BJ (cell line): ENCODE measurements at regions of chr7 and their contacts with region 1.

Region 1: DNA sequence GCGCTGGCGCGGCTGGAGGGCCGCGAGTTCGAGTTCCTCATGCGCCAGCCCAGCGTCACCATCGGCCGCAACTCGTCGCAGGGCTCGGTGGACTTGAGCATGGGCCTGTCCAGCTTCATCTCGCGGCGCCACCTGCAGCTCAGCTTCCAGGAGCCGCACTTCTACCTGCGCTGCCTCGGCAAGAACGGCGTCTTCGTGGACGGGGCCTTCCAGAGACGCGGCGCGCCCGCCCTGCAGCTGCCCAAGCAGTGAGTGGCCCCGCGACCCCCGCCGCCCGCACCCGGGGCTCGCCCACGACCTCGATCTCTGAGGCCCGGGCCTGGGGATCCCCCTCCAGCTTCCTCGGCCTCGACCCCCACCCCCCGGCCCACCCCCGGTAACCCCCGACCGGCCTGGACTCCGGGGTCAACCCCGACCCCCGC is 537 bp downstream of the FOXK1 start:
- DNase-seq: no peak
- H3K4me3 ChIP-seq: peak overlapping the region; percentile 92
- H3K27me3 ChIP-seq: no peaks in the 10 kb centered on the region
- CTCF ChIP-seq: no peak

Region 2: DNA sequence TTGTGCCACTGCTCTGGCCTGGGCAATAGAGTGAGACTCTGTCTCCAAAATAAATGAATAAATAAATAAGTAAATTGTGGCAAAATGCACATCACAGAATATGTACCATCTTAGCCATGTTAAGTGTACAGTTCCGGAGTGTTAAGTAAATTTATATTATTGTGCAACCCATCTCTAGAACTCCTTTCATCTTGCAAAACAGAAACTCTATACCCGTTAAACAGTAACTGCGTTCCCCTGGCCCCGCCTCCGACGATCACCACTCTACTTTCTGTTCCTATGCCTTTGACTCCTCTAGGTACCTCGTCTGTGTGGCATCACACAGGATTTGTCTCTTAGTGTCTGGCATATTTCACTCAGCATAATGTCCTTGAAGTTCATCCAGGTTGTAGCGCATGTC is 356.9 kb before region 1 on chr7:
- CTCF ChIA-PET with region 1: no interaction called
- POLR2A ChIA-PET with region 1: no interaction called
- DNase-seq: no peak
- H3K4me3 ChIP-seq: no peak overlapping the region
- H3K27me3 ChIP-seq: no peaks in the 10 kb centered on the region
- CTCF ChIP-seq: no peak

Region 3: DNA sequence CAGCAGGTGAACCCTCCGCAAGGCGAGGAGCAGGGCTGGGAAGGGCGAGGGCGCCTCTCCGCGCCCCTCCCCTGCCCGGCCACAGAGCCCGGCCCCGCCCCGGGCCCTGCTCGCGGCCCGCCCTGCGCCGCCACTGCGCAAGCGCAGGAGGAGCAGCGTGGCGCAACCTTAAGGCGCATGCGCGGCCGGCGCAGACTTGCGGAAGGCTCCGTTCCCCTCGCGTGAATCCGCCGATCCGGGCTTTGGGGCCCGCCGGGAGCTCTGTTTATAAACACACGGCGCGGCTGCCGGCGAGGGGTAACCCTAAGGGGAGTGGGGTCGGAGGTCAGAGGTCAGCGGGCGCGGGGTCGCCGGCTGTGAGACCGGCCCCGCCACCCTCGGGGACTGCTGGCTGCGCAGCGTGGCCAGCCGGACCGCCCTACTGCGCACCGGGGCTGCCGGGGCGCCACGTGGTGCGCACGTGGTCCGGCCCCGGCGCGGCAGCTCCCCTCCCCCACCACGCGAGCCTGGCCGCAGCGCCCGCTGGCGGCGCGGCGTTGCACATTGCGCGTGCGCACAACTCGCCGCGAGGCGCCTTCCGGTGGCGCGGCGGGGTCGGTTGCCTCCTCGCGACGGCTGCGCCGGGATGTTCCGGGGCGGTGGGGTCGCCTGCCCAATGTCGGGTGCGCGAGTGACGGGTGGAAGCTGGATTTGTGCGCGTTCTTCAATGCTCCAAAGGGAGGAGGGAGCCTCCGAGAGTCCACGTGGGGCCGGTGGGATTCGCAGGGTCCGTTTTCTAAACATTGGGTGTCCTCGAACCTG is 40.8 kb before region 1 on chr7:
- CTCF ChIA-PET with region 1: interaction called, 10 read pairs
- POLR2A ChIA-PET with region 1: interaction called, 3 read pairs
- DNase-seq: no peak
- H3K4me3 ChIP-seq: peak overlapping the region; percentile 72
- H3K27me3 ChIP-seq: no peaks in the 10 kb centered on the region
- CTCF ChIP-seq: 0 out of 2 replicates have a peak, but pooled peaks have one; percentile 13

Region 4: DNA sequence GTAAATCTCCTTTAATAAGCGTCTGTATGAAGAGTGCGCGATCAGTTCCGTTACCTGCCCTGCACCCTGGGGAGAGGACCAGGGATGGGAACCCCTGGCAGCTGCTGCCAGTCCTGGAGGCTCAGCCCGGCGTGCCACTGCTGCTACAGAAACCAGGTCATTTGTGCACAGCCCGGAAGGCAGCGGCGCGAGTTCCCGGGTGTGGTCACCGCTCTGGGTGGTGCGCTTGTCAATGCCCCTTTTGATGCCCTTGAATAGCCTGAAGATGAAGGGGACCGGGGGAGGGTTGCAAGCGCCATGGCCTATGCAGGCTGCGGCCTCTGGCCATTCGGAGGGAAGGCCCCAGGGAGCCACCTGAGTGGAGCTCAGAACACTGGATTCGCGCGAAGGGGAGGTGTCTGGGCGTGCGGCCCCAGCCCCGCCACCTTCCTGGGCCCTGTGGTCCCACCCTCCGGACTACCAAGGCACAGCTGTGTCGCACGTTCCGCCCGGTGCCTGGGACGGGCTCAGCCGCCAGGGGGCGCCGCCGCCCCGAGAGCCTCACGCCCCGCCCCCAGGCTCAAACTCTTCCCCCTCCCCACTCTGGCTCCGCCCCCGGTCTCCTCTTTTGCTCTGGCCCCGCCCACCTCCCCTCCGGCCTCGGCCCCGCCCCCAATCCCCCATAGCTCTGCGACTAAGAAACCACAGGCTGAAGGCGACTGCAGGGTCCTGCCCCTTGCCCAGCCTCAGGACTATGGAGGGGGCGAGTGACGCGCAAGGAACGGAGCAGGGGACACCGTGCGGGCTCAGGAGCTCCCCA is 109.3 kb after region 1 on chr7:
- CTCF ChIA-PET with region 1: no interaction called
- POLR2A ChIA-PET with region 1: no interaction called
- DNase-seq: no peak
- H3K4me3 ChIP-seq: no peak overlapping the region
- H3K27me3 ChIP-seq: no peaks in the 10 kb centered on the region
- CTCF ChIP-seq: peak; percentile 68